ENCODE measurements at regions of chr1 and their contacts with region 1.

Region 1: GRCh38 chr1:199954699-199955098 is 72.8 kb upstream of the NR5A2 start:
- DNase-seq: no peak
- ATAC-seq: peak; percentile 76; the same call in 1 of the 2 replicates
- H3K4me3 ChIP-seq: no peak overlapping the region
- H3K27ac ChIP-seq: no peak overlapping the region
- H3K4me1 ChIP-seq: no peaks in the 10 kb centered on the region
- H3K27me3 ChIP-seq: no peaks in the 10 kb centered on the region
- CTCF ChIP-seq: peak; percentile 77

Region 2: DNA sequence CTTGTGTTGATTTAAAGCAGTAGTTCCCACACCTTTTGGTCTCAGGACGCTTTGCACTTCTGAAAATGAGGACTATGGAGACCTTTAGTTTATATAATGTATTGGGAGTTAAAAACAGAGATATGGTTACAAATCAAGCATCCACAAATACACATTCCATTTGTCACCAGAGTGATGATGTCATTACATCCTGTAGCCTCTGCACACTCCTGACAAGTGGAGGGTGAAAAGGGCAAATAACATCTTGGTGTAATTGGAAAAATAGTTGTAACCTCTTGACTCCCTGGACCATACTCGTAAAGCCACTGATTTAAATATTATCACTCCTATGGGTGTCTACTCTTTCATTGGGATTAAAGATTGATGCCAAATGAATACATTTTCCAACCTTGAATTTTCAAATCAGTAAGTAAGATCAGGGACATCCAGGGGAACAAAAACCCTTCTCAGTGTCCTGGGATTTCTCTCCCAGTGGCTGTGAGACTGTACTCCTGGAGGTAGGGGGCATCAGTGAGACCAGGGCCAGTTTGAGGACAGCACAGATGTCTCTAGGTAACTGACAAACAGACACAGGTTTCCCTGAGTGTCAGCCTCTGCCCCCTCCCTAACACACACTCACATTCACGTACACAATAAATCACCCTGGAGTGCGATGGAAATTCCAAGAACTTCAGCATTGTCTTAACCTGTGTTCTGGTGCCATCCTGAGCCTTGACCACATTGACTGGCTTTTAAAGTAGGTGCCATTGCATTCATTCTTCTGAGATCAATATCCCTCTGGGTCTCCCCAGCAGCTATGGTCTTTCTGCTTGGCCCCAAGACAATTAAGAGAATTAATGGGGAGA is 135.8 kb after region 1 on chr1:
- CTCF ChIA-PET with region 1: no interaction called
- POLR2A ChIA-PET with region 1: no interaction called
- in situ Hi-C with region 1: no loop called
- intact Hi-C with region 1: no loop called
- DNase-seq: no peak
- ATAC-seq: peak; percentile 68; the same call in 1 of the 2 replicates
- H3K4me3 ChIP-seq: no peak overlapping the region
- H3K27ac ChIP-seq: no peak overlapping the region
- H3K4me1 ChIP-seq: no peaks in the 10 kb centered on the region
- H3K27me3 ChIP-seq: no peaks in the 10 kb centered on the region
- CTCF ChIP-seq: peak; percentile 65

Region 3: DNA sequence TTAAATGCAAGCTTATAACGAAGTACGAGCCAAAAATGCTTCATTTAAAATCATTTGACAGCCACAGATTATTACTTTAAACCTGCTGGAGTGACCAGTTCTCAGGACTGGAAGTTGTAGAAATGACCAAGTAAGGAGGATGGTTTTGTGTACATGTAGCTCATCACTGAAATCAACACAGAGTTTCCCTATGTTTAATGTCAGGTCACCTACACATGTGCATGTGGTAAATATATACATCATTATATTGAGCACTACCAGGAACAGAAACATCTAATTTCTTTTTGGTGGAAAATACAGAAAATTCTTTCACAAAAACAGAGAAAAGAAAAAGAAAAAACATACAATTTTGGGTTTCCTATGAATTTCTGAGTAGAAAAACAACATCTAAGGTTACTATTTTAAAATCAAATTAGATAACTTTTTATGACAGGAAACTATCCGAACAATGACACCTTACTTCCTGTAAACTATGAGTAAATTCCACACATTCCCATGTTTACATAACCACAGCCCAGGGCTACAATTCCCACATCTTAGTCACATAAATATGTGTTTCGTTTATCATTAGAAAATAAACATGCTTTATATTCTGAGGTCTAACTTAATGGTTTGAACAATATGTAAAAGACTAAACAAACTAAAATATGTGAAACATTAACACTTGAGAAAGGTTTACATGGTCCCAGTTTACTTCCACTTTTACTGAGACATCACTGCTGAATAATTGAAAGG is 381.6 kb after region 1 on chr1:
- CTCF ChIA-PET with region 1: no interaction called
- POLR2A ChIA-PET with region 1: interaction called, 10 read pairs
- in situ Hi-C with region 1: no loop called
- intact Hi-C with region 1: no loop called
- DNase-seq: peak; percentile 57
- ATAC-seq: peak; percentile 88
- H3K4me3 ChIP-seq: no peak overlapping the region
- H3K27ac ChIP-seq: peak overlapping the region; percentile 67; the same call in 1 of the 2 replicates
- H3K4me1 ChIP-seq: peaks cover 12% of the 10 kb centered on the region
- H3K27me3 ChIP-seq: no peaks in the 10 kb centered on the region
- CTCF ChIP-seq: no peak

Region 4: GRCh38 chr1:200558866-200559459 is 604.3 kb after region 1 on chr1:
- CTCF ChIA-PET with region 1: no interaction called
- POLR2A ChIA-PET with region 1: interaction called, 17 read pairs
- in situ Hi-C with region 1: no loop called
- intact Hi-C with region 1: no loop called
- DNase-seq: peak; percentile 38
- ATAC-seq: peak; percentile 83
- H3K4me3 ChIP-seq: no peak overlapping the region
- H3K27ac ChIP-seq: no peak overlapping the region
- H3K4me1 ChIP-seq: no peaks in the 10 kb centered on the region
- H3K27me3 ChIP-seq: no peaks in the 10 kb centered on the region
- CTCF ChIP-seq: peak; percentile 75; the same call in 1 of the 2 replicates